ENCODE measurements at regions of chr3 and their contacts with region 1.

Region 1: DNA sequence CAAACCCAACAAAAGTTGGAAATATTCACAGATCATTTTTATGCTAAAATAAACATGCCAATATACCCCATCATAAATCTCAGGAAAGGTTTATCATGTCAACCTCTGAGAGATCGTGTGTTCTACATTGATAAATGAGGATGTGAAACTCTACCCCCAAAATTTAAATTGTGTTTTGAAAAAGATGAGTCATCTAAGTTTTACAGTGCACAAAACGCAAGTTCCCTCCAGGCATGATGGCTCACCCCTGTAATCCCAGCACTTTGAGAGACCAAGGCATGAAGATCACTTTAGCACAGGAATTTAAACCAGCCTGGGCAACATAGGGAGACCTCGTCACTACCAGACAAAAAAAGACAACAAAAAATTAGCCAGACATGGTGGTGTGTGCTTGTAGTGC is 1487.0 kb upstream of the GBE1 start:
- DNase-seq: no peak
- ATAC-seq: no peak
- H3K4me3 ChIP-seq: no peak overlapping the region
- H3K27ac ChIP-seq: no peak overlapping the region
- H3K4me1 ChIP-seq: no peaks in the 10 kb centered on the region
- H3K27me3 ChIP-seq: no peaks in the 10 kb centered on the region
- CTCF ChIP-seq: no peak
- POLR2A ChIP-seq: no peak
- RAD21 ChIP-seq: no peak

Region 2: DNA sequence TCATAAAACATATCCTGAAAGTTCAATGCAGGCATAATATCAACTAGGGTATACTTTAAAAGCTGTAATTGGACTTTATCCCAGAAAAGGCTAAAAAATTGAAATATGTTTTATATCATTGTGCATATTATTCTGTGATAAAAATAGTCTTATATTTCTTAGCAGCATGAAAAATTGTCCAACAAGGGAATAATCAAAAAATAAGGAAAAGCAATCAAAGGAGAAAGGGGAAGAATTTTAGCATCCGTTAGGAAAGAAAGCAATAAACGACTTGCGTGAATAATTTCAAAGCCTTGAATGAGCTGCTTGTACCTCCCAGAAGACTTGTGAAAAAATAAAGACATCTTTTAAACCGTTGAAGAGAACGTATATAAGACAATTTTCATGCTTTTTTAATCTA is 117.2 kb before region 1 on chr3:
- CTCF ChIA-PET with region 1: no interaction called
- POLR2A ChIA-PET with region 1: no interaction called
- dilution Hi-C with region 1: no loop called
- in situ Hi-C with region 1: loop called (anchors 25 kb)
- intact Hi-C with region 1: no loop called
- DNase-seq: no peak
- ATAC-seq: no peak
- H3K4me3 ChIP-seq: no peak overlapping the region
- H3K27ac ChIP-seq: no peak overlapping the region
- H3K4me1 ChIP-seq: no peaks in the 10 kb centered on the region
- H3K27me3 ChIP-seq: no peaks in the 10 kb centered on the region
- CTCF ChIP-seq: no peak
- POLR2A ChIP-seq: no peak
- RAD21 ChIP-seq: no peak

Measured in IMR-90 (cell line).